Ovary (tissue), 10 donors: ENCODE measurements at regions of chr12 and their contacts with region 1.

Region 1: GRCh38 chr12:99767809-99768208 is 120.3 kb downstream of the GARIN6 start:
- DNase-seq: no peak
- H3K4me3 ChIP-seq: no peak overlapping the region
- H3K27ac ChIP-seq: no peak overlapping the region
- H3K4me1 ChIP-seq: no peaks in the 10 kb centered on the region
- H3K27me3 ChIP-seq: no peaks in the 10 kb centered on the region
- CTCF ChIP-seq: no peak
- EP300 ChIP-seq: no peak
- POLR2A ChIP-seq: no peak

Region 2: GRCh38 chr12:99043319-99043914 is 724.4 kb before region 1 on chr12:
- intact Hi-C with region 1: loop called in 1 of 4 experiments (anchors 10 kb)
- DNase-seq: peak in 4 of 5 donors; percentile 27 to 52 (median 39)
- H3K4me3 ChIP-seq: no peak overlapping the region
- H3K27ac ChIP-seq: no peak overlapping the region
- H3K4me1 ChIP-seq: no peaks in the 10 kb centered on the region
- H3K27me3 ChIP-seq: no peaks in the 10 kb centered on the region
- CTCF ChIP-seq: peak in 1 of 3 donors; percentile 21
- EP300 ChIP-seq: no peak
- POLR2A ChIP-seq: no peak